Activated T-helper 1 cell treated with anti-CD3 and anti-CD28 coated beads, Interleukin-12 subunit alpha, Interleukin-12 subunit beta, Interleukin-2, Interleukin-4 antibody, amounts not matched to agents 30 ng/mL and 10 ng/mL and 1 ng/mL, durations not matched to agents 14 hours and 24 hours and 36 hours (primary cell): ENCODE measurements at regions of chr6 and their contacts with region 1.

Region 1: DNA sequence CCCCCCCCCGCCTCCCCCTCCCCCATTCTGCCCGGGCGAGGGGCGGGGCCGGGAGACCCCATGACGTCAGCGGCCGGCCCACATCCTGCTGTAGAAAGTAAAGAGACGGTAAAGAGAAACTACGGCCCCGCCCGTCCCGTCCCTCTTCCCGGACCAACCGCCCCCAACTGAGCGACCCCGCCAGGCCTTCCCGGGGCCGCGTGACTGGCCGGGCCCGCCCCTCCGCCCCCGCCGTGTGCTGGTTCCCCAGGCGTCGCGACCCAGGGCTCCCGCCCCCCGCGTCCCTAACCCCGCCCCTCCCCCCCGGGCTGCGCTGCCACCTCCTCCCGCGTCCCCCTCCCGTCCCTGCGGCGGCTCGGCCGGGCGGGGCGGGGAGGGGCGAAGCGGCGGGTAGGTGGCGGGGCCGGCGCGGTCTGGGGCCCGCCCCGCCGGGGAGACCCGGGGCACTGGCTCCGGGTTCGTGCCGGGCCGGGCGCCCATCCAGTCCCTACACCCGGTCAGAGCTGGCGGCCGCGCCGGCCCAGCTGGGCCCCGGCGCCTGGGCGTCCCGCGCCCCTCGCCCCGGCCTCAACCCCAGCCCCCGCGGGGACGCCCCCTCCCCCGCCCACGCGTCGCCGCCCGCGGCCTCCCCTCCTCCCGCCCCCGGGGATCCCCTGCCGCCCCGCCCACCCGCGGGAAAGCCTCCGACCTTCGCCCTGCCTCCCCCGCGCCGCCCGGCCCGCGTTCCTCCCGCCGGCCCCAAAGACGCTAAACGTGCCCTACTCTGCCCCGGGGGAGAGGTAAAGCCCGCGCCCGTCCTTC is 636 bp upstream of the HIVEP1 start:
- DNase-seq: peak; percentile 92
- H3K4me3 Mint-ChIP-seq: peak overlapping the region; percentile 97
- H3K27ac Mint-ChIP-seq: peak overlapping the region; percentile 97
- H3K4me1 Mint-ChIP-seq: peaks cover 62% of the 10 kb centered on the region
- H3K27me3 Mint-ChIP-seq: no peaks in the 10 kb centered on the region

Region 2: DNA sequence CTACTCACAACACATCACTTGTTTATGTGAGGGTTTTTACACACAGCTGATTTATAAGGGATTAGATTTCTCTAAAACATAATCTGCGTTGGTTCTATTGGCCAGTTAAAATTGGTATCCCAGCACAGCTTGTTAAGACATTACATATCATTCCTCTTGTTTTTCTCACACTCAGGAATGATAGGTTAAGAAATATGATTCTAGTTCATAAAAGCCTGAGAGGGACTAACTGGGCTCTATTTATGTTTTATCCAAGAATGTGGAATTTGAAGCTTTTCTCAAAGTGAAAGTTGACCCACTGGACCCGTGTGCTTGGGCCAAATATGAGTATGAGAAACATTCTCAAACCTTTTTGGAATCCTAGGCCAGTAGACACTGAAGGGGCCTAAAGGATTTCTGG is 356.6 kb before region 1 on chr6:
- intact Hi-C with region 1: loop called (anchors 2 kb)
- DNase-seq: no peak
- H3K4me3 Mint-ChIP-seq: no peak overlapping the region
- H3K27ac Mint-ChIP-seq: no peak overlapping the region
- H3K4me1 Mint-ChIP-seq: peaks cover 20% of the 10 kb centered on the region
- H3K27me3 Mint-ChIP-seq: no peaks in the 10 kb centered on the region

Region 3: DNA sequence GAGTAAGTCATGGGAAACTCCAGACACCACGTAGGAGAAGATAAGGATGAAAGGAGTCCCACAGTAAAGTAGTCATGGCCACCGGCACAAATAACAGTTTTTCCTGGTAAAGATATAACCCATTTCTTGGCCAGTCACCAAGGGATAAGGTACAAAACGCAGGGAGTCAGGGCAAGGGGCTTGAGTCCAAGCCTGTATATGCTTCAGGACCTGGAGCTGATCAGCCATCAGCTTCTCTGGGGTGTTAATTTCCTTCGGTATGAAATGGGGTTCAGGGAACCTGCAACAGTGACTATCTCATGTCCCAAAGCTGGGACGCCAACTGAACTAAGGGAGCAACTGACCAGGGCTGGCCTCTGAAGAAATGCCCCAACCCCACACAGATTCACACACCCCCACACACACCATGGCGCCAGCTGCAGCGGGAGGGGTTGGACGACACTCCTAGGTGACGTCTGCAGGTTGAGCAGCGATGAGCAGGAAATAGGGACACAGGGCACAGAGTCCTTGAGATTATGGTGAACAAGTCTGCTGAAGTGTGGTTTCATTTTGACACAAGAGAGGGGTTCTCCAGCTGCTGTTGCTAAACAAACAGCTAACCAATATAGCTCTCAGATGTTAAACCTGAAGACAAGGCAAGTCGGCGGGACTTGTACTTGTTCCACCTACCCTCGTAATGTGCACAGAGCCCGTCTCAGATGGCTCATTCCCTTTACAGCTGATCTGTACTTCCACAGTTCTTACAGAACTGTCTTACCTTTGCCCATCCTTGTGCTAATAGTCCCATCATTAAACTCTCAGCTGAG is 225.5 kb before region 1 on chr6:
- intact Hi-C with region 1: loop called (anchors 1 kb)
- DNase-seq: peak; percentile 64
- H3K4me3 Mint-ChIP-seq: peak overlapping the region; percentile 28
- H3K27ac Mint-ChIP-seq: peak overlapping the region; percentile 85
- H3K4me1 Mint-ChIP-seq: peaks cover 13% of the 10 kb centered on the region
- H3K27me3 Mint-ChIP-seq: no peaks in the 10 kb centered on the region

Region 4: GRCh38 chr6:11975353-11975977 is 36.0 kb before region 1 on chr6:
- intact Hi-C with region 1: loop called (anchors 1 kb)
- DNase-seq: no peak
- H3K4me3 Mint-ChIP-seq: no peak overlapping the region
- H3K27ac Mint-ChIP-seq: no peak overlapping the region
- H3K4me1 Mint-ChIP-seq: peaks cover 29% of the 10 kb centered on the region
- H3K27me3 Mint-ChIP-seq: peaks cover 3% of the 10 kb centered on the region

Region 5: GRCh38 chr6:12075067-12075563 is 63.6 kb after region 1 on chr6:
- intact Hi-C with region 1: loop called (anchors 1 kb)
- DNase-seq: no peak
- H3K4me3 Mint-ChIP-seq: no peak overlapping the region
- H3K27ac Mint-ChIP-seq: no peak overlapping the region
- H3K4me1 Mint-ChIP-seq: peaks cover 54% of the 10 kb centered on the region
- H3K27me3 Mint-ChIP-seq: no peaks in the 10 kb centered on the region

Region 6: GRCh38 chr6:12182676-12183075 is 171.2 kb after region 1 on chr6:
- intact Hi-C with region 1: no loop called
- DNase-seq: no peak
- H3K4me3 Mint-ChIP-seq: no peak overlapping the region
- H3K27ac Mint-ChIP-seq: no peak overlapping the region
- H3K4me1 Mint-ChIP-seq: peaks cover 14% of the 10 kb centered on the region
- H3K27me3 Mint-ChIP-seq: peaks cover 14% of the 10 kb centered on the region

Region 7: GRCh38 chr6:12289933-12290820 is 278.7 kb after region 1 on chr6 and contains the start of gene EDN1:
- intact Hi-C with region 1: loop called (anchors 2 kb)
- DNase-seq: peak; percentile 50
- H3K4me3 Mint-ChIP-seq: peak within 1 kb of the TSS; percentile 81
- H3K27ac Mint-ChIP-seq: no peak within 1 kb of the TSS
- H3K4me1 Mint-ChIP-seq: peaks cover 18% of the 10 kb centered on the region
- H3K27me3 Mint-ChIP-seq: peaks cover 34% of the 10 kb centered on the region
- total RNA-seq, gene EDN1: 0.12 and 0.36 TPM in 2 replicates